ENCODE measurements at regions of chr10 and their contacts with region 1.

Region 1: GRCh38 chr10:80529604-80530003 is 8.1 kb upstream of the SH2D4B start:
- DNase-seq: no peak
- ATAC-seq: no peak
- H3K4me3 ChIP-seq: no peak overlapping the region
- H3K27ac ChIP-seq: no peak overlapping the region
- H3K4me1 ChIP-seq: no peaks in the 10 kb centered on the region
- H3K27me3 ChIP-seq: no peaks in the 10 kb centered on the region; the same call in 1 of the 2 replicates
- CTCF ChIP-seq: no peak

Region 2: GRCh38 chr10:80272793-80273517 is 256.6 kb before region 1 on chr10:
- CTCF ChIA-PET with region 1: no interaction called
- POLR2A ChIA-PET with region 1: no interaction called
- in situ Hi-C with region 1: no loop called
- intact Hi-C with region 1: loop called (anchors 10 kb)
- DNase-seq: no peak
- ATAC-seq: no peak
- H3K4me3 ChIP-seq: no peak overlapping the region
- H3K27ac ChIP-seq: no peak overlapping the region
- H3K4me1 ChIP-seq: no peaks in the 10 kb centered on the region
- H3K27me3 ChIP-seq: no peaks in the 10 kb centered on the region; the same call in 1 of the 2 replicates
- CTCF ChIP-seq: no peak

Measured in Panc1 (cell line).